Activated CD8-positive, alpha-beta T cell treated with anti-CD3 and anti-CD28 coated beads for 36 hours (primary cell): ENCODE measurements at regions of chr20 and their contacts with region 1.

Region 1: GRCh38 chr20:17504898-17505635 is 26.1 kb downstream of the BFSP1 start:
- DNase-seq: no peak
- ATAC-seq: peak; percentile 63
- H3K4me3 Mint-ChIP-seq: peak overlapping the region; percentile 78
- H3K27ac Mint-ChIP-seq: peak overlapping the region; percentile 85
- H3K4me1 Mint-ChIP-seq: peaks cover 37% of the 10 kb centered on the region
- H3K27me3 Mint-ChIP-seq: peaks cover 3% of the 10 kb centered on the region
- CTCF ChIP-seq: peak; percentile 74

Region 2: DNA sequence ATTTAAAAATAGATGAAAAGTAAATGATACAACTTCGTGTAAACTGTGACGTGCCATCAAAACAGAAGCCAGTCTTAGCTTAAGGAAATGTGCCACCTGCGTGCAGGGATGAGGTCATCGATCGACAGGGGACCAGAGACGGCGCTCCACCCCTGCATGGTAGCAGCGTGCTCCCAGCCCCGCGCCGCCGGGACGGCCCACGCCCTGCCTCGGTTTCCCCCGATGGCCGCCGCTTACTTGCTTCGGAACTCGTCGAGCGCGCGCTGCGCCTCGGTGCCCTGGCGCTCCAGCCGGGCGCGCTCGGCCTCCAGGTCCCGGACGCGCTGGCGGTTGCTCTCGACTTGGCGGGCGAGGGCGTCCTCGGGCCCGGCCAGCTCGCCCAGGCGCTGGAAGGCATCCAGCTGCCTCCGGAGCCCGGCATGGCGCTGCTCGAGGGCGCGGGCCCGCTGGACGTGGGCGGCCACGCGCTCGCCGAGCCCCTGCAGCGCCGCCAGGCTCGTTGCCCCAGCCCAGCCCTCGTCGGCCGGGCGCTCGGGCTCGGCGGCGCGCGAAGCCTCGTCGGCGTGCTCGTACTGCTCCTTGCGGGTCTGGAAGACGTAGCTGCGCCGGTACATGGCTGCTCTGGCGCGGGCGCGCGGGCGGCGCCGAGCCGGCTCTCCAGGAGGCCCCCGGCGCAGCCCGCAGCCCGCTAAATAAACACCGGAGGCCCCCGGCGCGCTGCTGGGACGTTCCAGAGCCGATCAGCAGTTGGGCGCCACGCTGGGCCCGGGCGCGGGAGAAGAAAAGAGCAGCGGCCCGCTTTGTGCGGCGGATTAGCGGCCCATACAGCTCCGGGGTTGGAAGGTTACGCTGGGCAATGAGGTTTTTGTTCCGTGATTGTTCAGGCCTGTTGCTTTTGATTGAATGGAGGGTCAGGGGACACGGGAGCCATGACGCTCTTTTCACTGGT is 25.9 kb after region 1 on chr20 and contains the start of gene BFSP1:
- CTCF ChIA-PET with region 1: interaction called, 16 read pairs
- POLR2A ChIA-PET with region 1: interaction called, 4 read pairs
- intact Hi-C with region 1: no loop called
- DNase-seq: peak; percentile 68
- ATAC-seq: peak; percentile 77
- H3K4me3 Mint-ChIP-seq: peak within 1 kb of the TSS; percentile 81
- H3K27ac Mint-ChIP-seq: peak within 1 kb of the TSS; percentile 68
- H3K4me1 Mint-ChIP-seq: peaks cover 17% of the 10 kb centered on the region
- H3K27me3 Mint-ChIP-seq: peaks cover 15% of the 10 kb centered on the region
- CTCF ChIP-seq: no peak
- total RNA-seq, gene BFSP1: 0.18 TPM

Region 3: DNA sequence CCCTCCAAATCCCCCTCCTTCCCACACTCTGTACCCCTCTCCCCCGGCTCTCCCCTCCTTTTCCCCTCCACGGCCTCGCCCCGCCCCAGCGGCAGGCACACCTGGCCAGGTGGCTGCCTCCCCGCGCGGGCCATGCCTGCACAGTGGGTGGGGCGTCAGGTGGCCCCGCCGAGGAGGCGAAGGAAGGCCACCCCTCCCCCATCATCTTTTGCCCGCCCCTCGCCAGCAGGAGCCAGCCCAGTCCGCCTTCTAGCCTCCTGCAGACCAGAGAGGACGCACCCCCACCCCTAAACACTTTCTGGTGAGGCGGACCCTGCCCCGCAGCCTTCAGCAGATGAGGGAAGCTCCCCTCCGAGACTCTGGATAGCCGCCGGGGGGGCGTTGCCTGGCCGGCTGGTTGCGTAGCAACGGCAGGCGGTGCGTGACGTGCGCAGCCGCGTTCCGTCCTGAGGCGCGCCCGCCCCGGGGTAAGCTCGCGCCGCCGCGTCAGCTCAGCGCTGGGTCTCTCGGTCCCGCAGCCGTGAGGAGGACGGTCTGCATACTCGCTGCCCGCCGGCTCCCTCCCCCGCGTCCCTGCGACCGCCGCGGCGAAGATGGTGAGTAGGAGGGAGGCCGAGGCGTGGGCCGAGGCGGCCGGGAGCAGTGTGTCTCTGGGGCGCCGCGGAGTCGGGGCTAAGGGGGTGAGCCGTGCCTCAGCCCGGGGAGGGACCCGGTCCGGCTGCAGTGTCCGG is 64.7 kb after region 1 on chr20 and contains the start of gene DSTN:
- CTCF ChIA-PET with region 1: interaction called, 12 read pairs
- POLR2A ChIA-PET with region 1: no interaction called
- intact Hi-C with region 1: no loop called
- DNase-seq: peak; percentile 87
- ATAC-seq: peak; percentile 90
- H3K4me3 Mint-ChIP-seq: peak within 1 kb of the TSS; percentile 83
- H3K27ac Mint-ChIP-seq: peak within 1 kb of the TSS; percentile 81
- H3K4me1 Mint-ChIP-seq: peaks cover 16% of the 10 kb centered on the region
- H3K27me3 Mint-ChIP-seq: peaks cover 2% of the 10 kb centered on the region
- CTCF ChIP-seq: no peak
- total RNA-seq, gene DSTN: 55.5 to 56.4 TPM

Region 4: DNA sequence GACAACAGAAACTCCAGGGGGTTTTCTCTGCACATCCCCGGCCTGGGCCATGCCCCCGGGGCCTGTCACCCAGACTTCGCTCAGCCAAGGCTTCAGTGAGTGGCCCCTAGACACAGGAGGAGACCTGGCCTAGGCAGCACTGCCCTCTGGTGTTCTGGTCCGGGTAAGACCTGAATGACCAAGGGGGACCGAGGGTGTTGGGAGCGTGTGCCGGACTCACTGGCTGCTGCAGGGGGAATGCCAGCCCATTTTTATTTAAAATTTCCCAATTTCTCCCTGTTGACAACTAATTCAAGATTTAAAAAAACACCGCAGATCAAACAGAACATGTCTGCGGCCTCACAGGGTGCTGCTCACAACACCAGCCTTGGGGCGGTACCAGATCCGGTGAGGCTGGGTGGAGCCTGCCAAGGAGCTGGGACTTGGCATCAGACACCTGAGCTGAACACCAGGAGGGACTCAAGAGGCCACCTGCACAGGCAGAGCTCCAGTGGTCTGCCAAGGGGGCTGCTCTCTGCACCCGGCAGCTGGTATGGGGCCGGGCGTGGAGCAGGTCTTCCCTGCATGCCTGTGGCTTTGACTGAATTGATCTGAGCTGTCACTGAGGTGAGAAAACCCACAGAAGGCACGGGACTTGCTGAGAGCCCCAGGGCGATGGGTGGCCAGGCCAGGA is 112.6 kb after region 1 on chr20:
- CTCF ChIA-PET with region 1: interaction called, 32 read pairs
- POLR2A ChIA-PET with region 1: no interaction called
- intact Hi-C with region 1: loop called (anchors 5 kb)
- DNase-seq: peak; percentile 62
- ATAC-seq: peak; percentile 66
- H3K4me3 Mint-ChIP-seq: no peak overlapping the region
- H3K27ac Mint-ChIP-seq: no peak overlapping the region
- H3K4me1 Mint-ChIP-seq: peaks cover 3% of the 10 kb centered on the region
- H3K27me3 Mint-ChIP-seq: no peaks in the 10 kb centered on the region
- CTCF ChIP-seq: peak; percentile 65

Region 5: DNA sequence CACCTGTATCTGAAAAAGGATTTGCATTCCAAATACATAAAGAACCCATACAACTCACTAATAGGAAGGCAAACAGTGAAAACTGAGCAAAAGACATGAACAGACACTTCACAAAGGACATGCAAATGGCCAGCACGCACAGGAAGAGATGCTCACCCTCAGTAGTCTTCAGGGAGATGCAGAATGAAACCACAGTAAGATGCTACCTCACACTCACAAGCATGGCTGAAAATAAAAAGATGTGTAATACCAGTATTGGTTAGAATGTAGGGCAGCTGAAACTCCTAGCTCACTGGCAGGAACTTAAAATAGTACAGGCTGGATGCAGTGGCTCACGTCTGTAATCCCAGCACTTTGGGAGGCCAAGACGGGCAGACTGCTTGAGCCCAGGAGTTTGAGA is 399.0 kb after region 1 on chr20:
- CTCF ChIA-PET with region 1: interaction called, 11 read pairs
- POLR2A ChIA-PET with region 1: no interaction called
- intact Hi-C with region 1: loop called (anchors 5 kb)
- DNase-seq: peak; percentile 42
- ATAC-seq: peak; percentile 93
- H3K4me3 Mint-ChIP-seq: no peak overlapping the region
- H3K27ac Mint-ChIP-seq: no peak overlapping the region
- H3K4me1 Mint-ChIP-seq: peaks cover 5% of the 10 kb centered on the region
- H3K27me3 Mint-ChIP-seq: peaks cover 10% of the 10 kb centered on the region
- CTCF ChIP-seq: no peak